Posterior vena cava (tissue), 2 donors: ENCODE measurements at regions of chr7 and their contacts with region 1.

Region 1: DNA sequence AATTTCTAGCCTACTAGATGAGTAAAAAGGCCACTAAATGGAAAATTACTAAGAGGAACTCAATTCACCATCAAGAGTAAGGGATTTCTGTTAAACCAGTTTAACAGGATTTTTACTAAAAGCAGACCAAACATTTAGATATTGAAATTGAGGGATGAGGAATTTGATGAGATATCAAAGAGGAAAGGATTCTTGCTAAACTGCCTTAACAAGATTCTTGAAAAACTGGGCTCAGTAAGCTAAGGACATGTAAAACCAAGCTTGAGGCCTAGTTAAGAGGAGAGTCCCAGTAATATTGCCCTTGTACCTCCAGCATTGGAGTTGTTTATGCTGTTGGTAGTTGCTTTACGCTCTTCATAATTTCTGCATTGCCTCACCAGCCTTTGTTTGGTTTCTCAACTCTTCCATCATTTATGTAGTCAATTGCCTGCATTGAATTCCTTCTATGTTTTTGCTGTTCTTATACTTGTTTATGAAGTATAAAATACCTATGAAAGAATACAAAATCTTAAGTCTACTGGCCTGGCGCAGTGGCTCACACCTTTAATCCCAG is 156.0 kb upstream of the TRIM24 start:
- DNase-seq: no peak

Region 2: GRCh38 chr7:138267934-138268333 is 36.1 kb before region 1 on chr7:
- intact Hi-C with region 1: loop called in 1 of 2 experiments (anchors 1 kb)
- DNase-seq: peak; percentile 79